Activated T-helper 1 cell treated with anti-CD3 and anti-CD28 coated beads, Interleukin-12 subunit alpha, Interleukin-12 subunit beta, Interleukin-2, Interleukin-4 antibody, amounts not matched to agents 30 ng/mL and 10 ng/mL and 1 ng/mL, durations not matched to agents 14 hours and 24 hours and 36 hours (primary cell): ENCODE measurements at regions of chr11 and their contacts with region 1.

Region 1: GRCh38 chr11:96284917-96285316 is 58.1 kb downstream of the MAML2 start:
- DNase-seq: no peak
- H3K4me3 Mint-ChIP-seq: no peak overlapping the region
- H3K27ac Mint-ChIP-seq: no peak overlapping the region
- H3K4me1 Mint-ChIP-seq: peaks cover 50% of the 10 kb centered on the region
- H3K27me3 Mint-ChIP-seq: no peaks in the 10 kb centered on the region

Region 2: GRCh38 chr11:96267496-96268032 is 17.4 kb before region 1 on chr11:
- intact Hi-C with region 1: loop called (anchors 2 kb)
- DNase-seq: no peak
- H3K4me3 Mint-ChIP-seq: peak overlapping the region; percentile 43
- H3K27ac Mint-ChIP-seq: peak overlapping the region; percentile 57
- H3K4me1 Mint-ChIP-seq: peaks cover 78% of the 10 kb centered on the region
- H3K27me3 Mint-ChIP-seq: no peaks in the 10 kb centered on the region